Naive thymus-derived CD4-positive, alpha-beta T cell (primary cell): ENCODE measurements at regions of chr3 and their contacts with region 1.

Region 1: DNA sequence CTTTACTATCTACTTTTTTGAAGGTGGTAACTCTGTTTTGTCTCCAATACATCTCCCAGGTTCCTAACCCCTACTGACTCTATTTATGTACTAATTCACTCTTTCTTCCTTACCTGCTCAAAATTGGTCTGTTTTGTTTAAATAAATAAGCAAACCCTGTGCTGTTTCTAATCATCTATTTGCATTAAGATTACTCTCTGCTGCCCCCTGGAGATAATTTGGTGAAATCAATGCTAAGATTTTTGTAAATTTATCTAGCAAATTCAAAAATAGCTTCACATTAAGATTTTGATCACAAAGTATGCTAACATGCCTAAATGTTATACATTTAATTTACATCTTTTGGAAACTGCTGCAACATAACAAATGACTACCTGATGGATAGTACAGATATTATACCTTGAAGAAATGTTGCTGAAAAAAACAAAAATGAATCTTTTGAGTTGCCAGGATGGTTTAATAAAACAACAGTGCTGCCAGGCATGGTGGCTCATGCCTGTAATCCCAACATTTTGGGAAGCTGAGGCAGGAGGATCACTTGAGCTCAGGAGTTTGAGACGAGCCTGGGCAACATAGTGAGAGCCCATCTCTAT is 4.4 kb upstream of the CD200R1 start:
- DNase-seq: peak in 7 of 9 donors; percentile 32 to 67 (median 62)
- ATAC-seq: peak; percentile 52
- H3K4me3 ChIP-seq: no peak overlapping the region
- H3K4me3 Mint-ChIP-seq: peak overlapping the region in 6 of 10 donors; percentile 0 to 59 (median 28)
- H3K27ac ChIP-seq: no peak overlapping the region
- H3K27ac Mint-ChIP-seq: peak overlapping the region in 7 of 9 donors; percentile 4 to 65 (median 38)
- H3K4me1 ChIP-seq: peaks cover 35 to 57% of the 10 kb centered on the region in 2 donors
- H3K4me1 Mint-ChIP-seq: peaks cover 45 to 73% (median 64%) of the 10 kb centered on the region in 7 donors
- H3K27me3 ChIP-seq: no peaks in the 10 kb centered on the region
- H3K27me3 Mint-ChIP-seq: peaks cover 0 to 3% (median 0%) of the 10 kb centered on the region in 5 donors

Region 2: GRCh38 chr3:112582244-112582874 is 397.0 kb before region 1 on chr3:
- CTCF ChIA-PET with region 1: no interaction called
- POLR2A ChIA-PET with region 1: no interaction called
- intact Hi-C with region 1: loop called (anchors 1 to 2 kb)
- DNase-seq: peak in 5 of 9 donors; percentile 8 to 39 (median 22)
- ATAC-seq: peak; percentile 60
- H3K4me3 ChIP-seq: no peak overlapping the region
- H3K4me3 Mint-ChIP-seq: no peak overlapping the region
- H3K27ac ChIP-seq: no peak overlapping the region
- H3K27ac Mint-ChIP-seq: no peak overlapping the region
- H3K4me1 ChIP-seq: no peaks in the 10 kb centered on the region
- H3K4me1 Mint-ChIP-seq: peaks cover 0 to 4% (median under 1%) of the 10 kb centered on the region in 7 donors
- H3K27me3 ChIP-seq: no peaks in the 10 kb centered on the region
- H3K27me3 Mint-ChIP-seq: no peaks in the 10 kb centered on the region

Region 3: DNA sequence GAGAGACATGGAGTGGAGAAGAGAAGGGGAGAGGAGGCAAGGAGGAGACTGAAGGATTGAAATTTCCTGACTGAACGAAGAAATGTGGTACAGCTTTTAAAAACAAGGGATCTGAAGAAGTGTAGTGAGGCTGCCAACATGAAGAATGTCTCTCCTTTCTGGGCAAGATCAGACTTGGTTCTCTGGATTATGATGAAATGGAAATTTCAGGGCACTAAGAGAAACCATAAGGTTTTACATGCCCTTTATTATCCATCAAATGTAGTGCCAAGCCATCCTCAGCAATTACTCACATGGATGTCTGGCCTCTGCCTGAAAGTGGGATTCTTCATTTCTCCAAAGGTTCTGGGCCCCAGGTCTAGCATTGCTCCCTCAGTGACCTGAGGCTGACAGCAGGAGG is 260.8 kb before region 1 on chr3:
- CTCF ChIA-PET with region 1: no interaction called
- POLR2A ChIA-PET with region 1: no interaction called
- intact Hi-C with region 1: no loop called
- DNase-seq: no peak
- ATAC-seq: no peak
- H3K4me3 ChIP-seq: no peak overlapping the region
- H3K4me3 Mint-ChIP-seq: no peak overlapping the region
- H3K27ac ChIP-seq: no peak overlapping the region
- H3K27ac Mint-ChIP-seq: no peak overlapping the region
- H3K4me1 ChIP-seq: no peaks in the 10 kb centered on the region
- H3K4me1 Mint-ChIP-seq: peaks cover 0 to 2% (median 0%) of the 10 kb centered on the region in 7 donors
- H3K27me3 ChIP-seq: no peaks in the 10 kb centered on the region
- H3K27me3 Mint-ChIP-seq: peaks cover 0 to 17% (median 6%) of the 10 kb centered on the region in 5 donors

Region 4: DNA sequence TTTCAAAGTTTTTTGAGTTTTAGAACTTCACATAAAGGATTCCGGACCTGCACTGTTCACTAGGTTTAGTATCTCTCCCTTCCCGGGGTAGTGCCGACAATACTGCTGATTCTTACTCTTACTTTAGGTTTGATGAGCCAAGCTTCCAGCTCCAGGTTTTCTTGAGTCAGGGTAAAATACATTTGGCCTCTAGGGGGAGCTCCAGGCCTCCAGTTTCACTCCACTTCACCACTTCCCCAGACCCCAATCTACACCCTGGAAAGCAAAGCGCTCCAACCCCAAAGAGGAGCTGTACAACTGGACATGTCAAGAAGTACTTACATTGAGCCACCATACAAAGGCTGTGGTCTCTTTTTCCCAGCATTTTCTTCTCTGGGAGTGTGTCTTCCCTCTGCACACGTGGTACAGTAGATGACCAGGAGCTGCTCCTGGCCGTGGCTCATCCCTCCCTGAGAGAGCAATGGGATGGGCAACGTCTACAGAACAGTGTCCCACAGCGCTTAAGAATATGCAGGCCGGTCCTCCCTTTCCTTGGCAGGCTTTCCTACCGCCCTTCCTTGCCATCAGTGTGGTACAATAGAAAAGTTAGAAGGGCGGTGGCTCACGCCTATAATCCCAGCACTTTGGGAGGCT is 244.5 kb before region 1 on chr3:
- CTCF ChIA-PET with region 1: interaction called, 72 read pairs
- POLR2A ChIA-PET with region 1: interaction called, 11 read pairs
- intact Hi-C with region 1: loop called (anchors 1 kb)
- DNase-seq: peak; percentile 14 to 76 (median 60)
- ATAC-seq: peak; percentile 82
- H3K4me3 ChIP-seq: no peak overlapping the region
- H3K4me3 Mint-ChIP-seq: peak overlapping the region in 1 of 10 donors; percentile 7
- H3K27ac ChIP-seq: no peak overlapping the region
- H3K27ac Mint-ChIP-seq: peak overlapping the region in 4 of 9 donors; percentile 8 to 76 (median 24)
- H3K4me1 ChIP-seq: peaks cover 25 to 44% of the 10 kb centered on the region in 2 donors
- H3K4me1 Mint-ChIP-seq: peaks cover 23 to 50% (median 46%) of the 10 kb centered on the region in 7 donors
- H3K27me3 ChIP-seq: no peaks in the 10 kb centered on the region
- H3K27me3 Mint-ChIP-seq: no peaks in the 10 kb centered on the region

Region 5: GRCh38 chr3:112751564-112752512 is 227.5 kb before region 1 on chr3:
- CTCF ChIA-PET with region 1: no interaction called
- POLR2A ChIA-PET with region 1: no interaction called
- intact Hi-C with region 1: no loop called
- DNase-seq: no peak
- ATAC-seq: no peak
- H3K4me3 ChIP-seq: no peak overlapping the region
- H3K4me3 Mint-ChIP-seq: no peak overlapping the region
- H3K27ac ChIP-seq: no peak overlapping the region
- H3K27ac Mint-ChIP-seq: no peak overlapping the region
- H3K4me1 ChIP-seq: peaks cover 0 to 6% of the 10 kb centered on the region in 2 donors
- H3K4me1 Mint-ChIP-seq: peaks cover 0 to 11% (median 5%) of the 10 kb centered on the region in 7 donors
- H3K27me3 ChIP-seq: no peaks in the 10 kb centered on the region
- H3K27me3 Mint-ChIP-seq: peaks cover 0 to 2% (median 0%) of the 10 kb centered on the region in 5 donors

Region 6: GRCh38 chr3:112966633-112967032 is 12.7 kb before region 1 on chr3:
- CTCF ChIA-PET with region 1: interaction called, 11 read pairs
- POLR2A ChIA-PET with region 1: no interaction called
- intact Hi-C with region 1: no loop called
- DNase-seq: no peak
- ATAC-seq: peak; percentile 37
- H3K4me3 ChIP-seq: no peak overlapping the region
- H3K4me3 Mint-ChIP-seq: peak overlapping the region in 6 of 10 donors; percentile 3 to 96 (median 44)
- H3K27ac ChIP-seq: no peak overlapping the region
- H3K27ac Mint-ChIP-seq: peak overlapping the region in 8 of 9 donors; percentile 9 to 92 (median 44)
- H3K4me1 ChIP-seq: peaks cover 0 to 21% of the 10 kb centered on the region in 2 donors
- H3K4me1 Mint-ChIP-seq: peaks cover 36 to 88% (median 79%) of the 10 kb centered on the region in 7 donors
- H3K27me3 ChIP-seq: no peaks in the 10 kb centered on the region
- H3K27me3 Mint-ChIP-seq: no peaks in the 10 kb centered on the region

Region 7: DNA sequence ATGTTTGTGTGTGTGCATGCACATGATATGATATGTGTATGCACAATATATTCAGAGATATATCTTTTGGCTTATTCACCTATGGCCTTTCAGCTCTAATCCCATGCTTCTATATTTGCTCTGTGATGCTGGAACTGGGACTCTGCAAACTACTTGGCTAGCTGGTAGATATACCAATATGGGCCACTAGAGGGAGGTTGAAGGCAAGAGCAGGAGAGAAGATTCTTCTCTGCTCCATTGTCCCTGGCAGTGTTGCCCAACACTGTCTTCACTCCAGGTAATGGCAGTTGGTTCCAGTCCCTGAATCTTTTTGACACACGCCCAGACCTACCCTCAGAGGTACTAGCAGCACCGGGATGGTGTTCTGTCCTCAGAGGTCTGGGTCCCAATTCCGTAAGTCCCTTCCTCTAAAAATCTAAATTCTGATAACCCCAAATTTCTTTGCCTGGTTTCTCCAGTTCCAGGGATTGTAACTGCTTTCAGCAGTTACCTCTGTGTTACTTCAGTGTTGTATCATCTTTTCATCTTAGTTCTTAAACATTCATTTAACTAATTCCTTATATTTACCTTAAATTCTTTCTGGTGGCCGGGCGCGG is 56.1 kb after region 1 on chr3:
- CTCF ChIA-PET with region 1: interaction called, 12 read pairs
- POLR2A ChIA-PET with region 1: no interaction called
- intact Hi-C with region 1: no loop called
- DNase-seq: peak in 6 of 9 donors; percentile 34 to 57 (median 44)
- ATAC-seq: peak; percentile 88
- H3K4me3 ChIP-seq: no peak overlapping the region
- H3K4me3 Mint-ChIP-seq: no peak overlapping the region
- H3K27ac ChIP-seq: no peak overlapping the region
- H3K27ac Mint-ChIP-seq: no peak overlapping the region
- H3K4me1 ChIP-seq: no peaks in the 10 kb centered on the region
- H3K4me1 Mint-ChIP-seq: peaks cover 0 to 5% (median 0%) of the 10 kb centered on the region in 7 donors
- H3K27me3 ChIP-seq: no peaks in the 10 kb centered on the region
- H3K27me3 Mint-ChIP-seq: no peaks in the 10 kb centered on the region